ENCODE measurements at regions of chr1 and their contacts with region 1.

Region 1: GRCh38 chr1:178532392-178532791 is 19.5 kb downstream of the TEX35 start:
- DNase-seq: peak; percentile 87
- ATAC-seq: peak; percentile 88 to 89
- H3K4me3 ChIP-seq: no peak overlapping the region
- H3K27ac ChIP-seq: no peak overlapping the region
- H3K4me1 ChIP-seq: peaks cover 18% of the 10 kb centered on the region
- H3K27me3 ChIP-seq: no peaks in the 10 kb centered on the region
- CTCF ChIP-seq: peak; percentile 89

Region 2: GRCh38 chr1:179002552-179003345 is 470.4 kb after region 1 on chr1:
- intact Hi-C with region 1: loop called (anchors 10 kb)
- DNase-seq: peak; percentile 65
- ATAC-seq: peak; percentile 86 to 90
- H3K4me3 ChIP-seq: no peak overlapping the region
- H3K27ac ChIP-seq: no peak overlapping the region
- H3K4me1 ChIP-seq: peaks cover 7% of the 10 kb centered on the region
- H3K27me3 ChIP-seq: peaks cover 3% of the 10 kb centered on the region
- CTCF ChIP-seq: peak; percentile 98